ENCODE measurements at regions of chr18 and their contacts with region 1.

Region 1: DNA sequence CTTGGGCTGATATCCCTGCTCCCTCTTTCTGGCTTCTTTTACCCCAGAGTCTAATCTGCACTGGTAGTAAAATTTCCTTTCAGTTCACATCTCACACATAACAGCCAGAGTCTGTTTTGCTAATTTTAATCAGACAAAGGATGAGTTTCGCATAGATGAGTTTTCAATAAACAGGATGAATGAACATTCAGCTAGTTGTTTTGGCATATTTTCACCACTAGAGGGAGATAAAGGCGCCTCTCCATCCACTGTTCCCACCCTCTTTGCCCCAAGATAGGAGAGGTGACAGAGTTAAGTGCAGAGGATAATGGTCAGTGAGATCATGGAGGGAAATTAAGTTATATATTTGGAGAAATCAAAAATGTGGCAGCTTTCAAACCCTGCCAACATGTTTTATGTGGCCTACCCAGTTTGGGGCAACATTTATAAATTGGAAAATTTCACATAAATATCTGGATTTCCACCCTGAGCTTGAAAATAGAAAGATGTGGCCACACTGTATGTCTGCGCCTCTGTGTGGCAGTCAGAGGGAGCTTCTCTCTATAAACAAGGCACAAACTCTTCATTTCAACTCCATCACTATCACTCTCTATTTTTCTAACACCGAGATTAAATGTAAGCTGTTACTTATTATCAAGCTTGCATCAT is 48.5 kb upstream of the DTNA start:
- H3K4me3 ChIP-seq: no peak overlapping the region
- H3K27ac ChIP-seq: no peak overlapping the region
- H3K4me1 ChIP-seq: peaks cover 5% of the 10 kb centered on the region
- CTCF ChIP-seq: peak; percentile 50

Region 2: DNA sequence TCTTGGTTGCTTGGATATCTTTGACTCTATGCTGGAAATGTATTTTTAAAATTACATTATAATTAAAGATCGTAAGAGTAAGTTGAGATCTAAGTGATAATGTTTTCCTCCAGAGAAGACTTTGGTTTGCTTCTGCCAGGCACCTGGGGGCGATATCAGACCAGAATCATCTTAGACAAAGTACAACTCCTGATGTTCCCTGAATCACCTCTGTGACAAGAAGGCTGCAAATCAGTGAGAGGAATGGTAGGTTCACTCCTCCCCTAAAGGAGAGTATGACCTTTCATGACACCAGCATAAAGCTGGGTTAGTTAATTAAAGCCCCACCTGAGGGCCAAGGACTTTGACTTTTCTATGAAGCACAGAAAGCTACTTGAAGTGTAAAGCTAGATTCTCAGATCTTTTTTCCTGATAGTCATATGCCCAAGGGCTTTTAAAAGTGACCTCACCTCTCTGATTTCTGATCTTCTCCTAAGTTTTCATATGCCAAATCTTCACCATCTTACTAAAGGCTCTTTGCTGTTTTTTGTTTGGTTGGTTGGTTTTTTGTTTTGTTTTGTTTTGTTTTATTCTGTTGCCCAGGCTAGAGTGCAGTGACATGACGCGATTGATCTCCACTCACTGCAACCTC is 65.8 kb before region 1 on chr18:
- CTCF ChIA-PET with region 1: interaction called, 27 read pairs
- POLR2A ChIA-PET with region 1: no interaction called
- H3K4me3 ChIP-seq: no peak overlapping the region
- H3K27ac ChIP-seq: no peak overlapping the region
- H3K4me1 ChIP-seq: no peaks in the 10 kb centered on the region
- CTCF ChIP-seq: peak; percentile 29; the same call in 1 of the 2 replicates

Region 3: GRCh38 chr18:34647251-34647650 is 14.3 kb before region 1 on chr18:
- CTCF ChIA-PET with region 1: interaction called, 41 read pairs
- POLR2A ChIA-PET with region 1: interaction called, 3 read pairs
- H3K4me3 ChIP-seq: no peak overlapping the region
- H3K27ac ChIP-seq: no peak overlapping the region
- H3K4me1 ChIP-seq: peaks cover 11% of the 10 kb centered on the region
- CTCF ChIP-seq: no peak

Region 4: DNA sequence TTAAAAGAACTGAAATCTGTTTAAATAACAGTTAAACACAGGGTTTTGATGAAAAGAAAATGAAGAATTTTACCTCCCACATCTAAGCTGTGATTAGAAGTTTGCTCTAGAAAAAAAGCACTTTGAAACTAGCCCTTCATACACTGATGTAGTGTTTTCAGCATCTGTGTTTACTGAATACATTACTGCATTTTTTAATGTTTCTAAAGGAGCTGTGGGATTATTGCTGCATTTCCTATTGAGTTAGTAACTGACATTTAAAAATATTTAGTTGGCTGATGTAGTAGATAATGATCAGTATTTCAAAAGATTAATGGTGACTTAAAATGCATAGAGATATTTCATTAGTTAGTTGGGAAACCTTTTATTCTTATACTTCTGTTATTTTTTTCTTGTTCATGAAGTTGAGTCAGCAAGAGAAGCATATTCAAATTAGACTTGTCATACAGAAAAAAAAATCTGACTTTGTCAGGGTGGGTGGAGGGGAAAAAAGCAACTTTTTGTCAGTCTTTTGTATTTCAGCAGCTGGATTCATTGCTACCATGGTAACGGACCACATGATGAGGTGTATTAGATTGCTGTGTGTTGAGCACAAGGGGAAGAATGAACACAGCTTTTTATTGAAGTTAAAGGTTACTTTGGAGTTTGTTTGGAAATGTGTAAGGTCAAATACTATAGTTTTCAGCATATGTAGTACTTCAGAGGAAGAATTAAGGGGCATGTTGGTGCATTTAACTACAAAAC is 48.3 kb after region 1 on chr18 and contains the start of gene DTNA:
- CTCF ChIA-PET with region 1: interaction called, 25 read pairs
- POLR2A ChIA-PET with region 1: interaction called, 4 read pairs
- H3K4me3 ChIP-seq: no peak within 1 kb of the TSS; the same call in 1 of the 2 replicates
- H3K27ac ChIP-seq: no peak within 1 kb of the TSS
- H3K4me1 ChIP-seq: peaks cover 22% of the 10 kb centered on the region
- CTCF ChIP-seq: no peak

Region 5: GRCh38 chr18:34775461-34775860 is 113.9 kb after region 1 on chr18:
- CTCF ChIA-PET with region 1: interaction called, 10 read pairs
- POLR2A ChIA-PET with region 1: no interaction called
- H3K4me3 ChIP-seq: no peak overlapping the region
- H3K27ac ChIP-seq: no peak overlapping the region
- H3K4me1 ChIP-seq: no peaks in the 10 kb centered on the region
- CTCF ChIP-seq: no peak

Region 6: DNA sequence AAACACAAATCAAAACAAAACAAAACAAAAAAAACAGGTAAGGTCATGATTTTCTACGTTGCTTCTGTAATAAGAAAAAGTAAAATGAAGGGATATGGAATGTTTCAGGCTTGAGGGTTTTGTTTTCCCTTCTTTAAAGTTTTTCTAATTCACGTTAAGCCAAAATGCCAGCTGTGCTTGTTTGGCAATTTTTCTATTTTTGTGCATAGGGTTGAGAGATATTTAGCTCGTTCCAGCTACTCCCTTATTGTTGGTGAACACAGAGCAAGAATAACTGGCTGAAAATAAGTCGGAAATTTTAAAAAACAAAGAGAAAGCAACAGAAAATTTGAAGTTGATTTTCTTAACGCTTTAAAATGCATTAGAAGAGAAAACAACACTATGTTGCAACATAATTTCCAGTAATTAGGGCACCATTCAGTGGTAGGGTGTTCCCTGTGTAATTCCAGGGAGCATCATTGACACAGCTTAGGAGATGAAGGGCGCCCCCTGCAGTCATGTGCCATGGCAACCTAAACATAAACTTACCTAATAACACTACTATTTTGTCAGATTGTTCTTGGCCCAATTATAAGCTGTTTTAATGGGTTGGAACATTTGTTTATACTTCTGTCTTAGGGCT is 148.0 kb after region 1 on chr18:
- CTCF ChIA-PET with region 1: interaction called, 16 read pairs
- POLR2A ChIA-PET with region 1: no interaction called
- H3K4me3 ChIP-seq: no peak overlapping the region
- H3K27ac ChIP-seq: no peak overlapping the region
- H3K4me1 ChIP-seq: no peaks in the 10 kb centered on the region
- CTCF ChIP-seq: 0 out of 2 replicates have a peak, but pooled peaks have one; percentile 9

Region 7: GRCh38 chr18:35005963-35006577 is 344.5 kb after region 1 on chr18:
- CTCF ChIA-PET with region 1: no interaction called
- POLR2A ChIA-PET with region 1: no interaction called
- H3K4me3 ChIP-seq: no peak overlapping the region
- H3K27ac ChIP-seq: no peak overlapping the region
- H3K4me1 ChIP-seq: no peaks in the 10 kb centered on the region
- CTCF ChIP-seq: peak; percentile 50

Measured in HEK293 (cell line).